ENCODE measurements at regions of chr4 and their contacts with region 1.

Region 1: DNA sequence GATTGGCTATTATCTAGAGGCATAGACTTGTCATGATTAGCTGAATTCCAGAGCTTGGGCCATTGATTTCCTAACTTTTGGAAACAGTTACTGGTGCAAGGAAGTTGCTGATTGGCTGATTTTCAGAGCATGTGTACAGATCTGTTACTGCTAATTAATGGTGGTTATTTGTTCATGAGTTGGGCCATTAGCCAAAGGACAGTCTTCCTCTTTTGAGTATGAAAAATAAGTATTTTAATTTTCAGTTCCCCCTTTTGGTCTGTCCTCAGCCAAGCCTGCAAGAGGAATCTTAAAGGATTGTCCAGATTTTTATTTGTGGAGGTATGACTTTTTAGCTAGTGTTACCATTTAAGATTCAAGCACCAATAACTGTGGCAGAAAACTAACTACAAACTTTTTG is 7.0 kb upstream of the DSPP start:
- DNase-seq: no peak

Region 2: DNA sequence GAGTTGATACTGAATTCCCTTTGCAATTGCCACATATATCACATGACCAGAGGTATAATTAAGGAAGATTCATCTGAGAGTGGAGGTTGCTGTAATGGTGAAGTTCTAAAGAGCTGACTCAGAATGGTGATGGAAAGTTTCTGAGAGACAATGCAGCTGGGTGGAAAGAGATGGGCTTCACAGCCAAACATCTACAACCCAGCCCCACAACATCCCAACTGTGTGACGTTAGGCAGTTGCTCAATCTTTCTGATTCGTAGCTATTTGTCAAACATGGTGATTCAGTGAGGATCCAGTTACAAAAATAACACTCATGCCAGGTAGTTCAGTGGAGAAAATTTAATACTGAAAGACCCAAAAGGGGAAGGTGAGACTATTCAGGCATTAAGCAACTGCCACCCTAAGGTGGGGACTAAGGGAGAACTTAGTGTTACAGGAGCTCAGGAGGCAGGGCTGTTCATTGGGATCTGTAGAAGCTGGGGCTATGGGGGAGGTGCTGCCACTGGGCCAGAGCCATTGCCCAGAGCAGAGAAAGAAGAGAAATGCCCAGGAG is 673.4 kb before region 1 on chr4:
- intact Hi-C with region 1: no loop called
- DNase-seq: no peak

Region 3: DNA sequence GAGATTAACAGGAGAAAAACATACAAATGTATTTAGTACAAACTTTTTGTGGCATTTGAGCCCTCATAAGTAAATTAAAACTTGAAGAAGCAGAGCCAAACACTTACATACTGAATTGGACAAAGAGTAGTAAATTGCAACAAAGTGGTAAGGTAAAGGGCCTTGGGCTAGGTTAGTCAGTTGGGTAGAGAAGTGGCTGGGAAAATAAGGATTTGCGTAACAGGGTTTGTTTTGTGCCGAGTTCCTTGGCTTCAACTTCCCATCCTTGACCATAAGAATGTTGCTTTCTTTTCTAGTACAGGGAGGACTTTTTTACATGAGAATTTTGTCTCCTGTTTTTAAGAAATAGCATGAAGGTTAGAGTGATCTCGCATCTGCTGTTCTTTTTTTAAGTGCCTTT is 26.4 kb before region 1 on chr4:
- intact Hi-C with region 1: loop called in 1 of 2 experiments (anchors 1 kb)
- DNase-seq: no peak